ENCODE measurements at regions of chr10 and their contacts with region 1.

Region 1: DNA sequence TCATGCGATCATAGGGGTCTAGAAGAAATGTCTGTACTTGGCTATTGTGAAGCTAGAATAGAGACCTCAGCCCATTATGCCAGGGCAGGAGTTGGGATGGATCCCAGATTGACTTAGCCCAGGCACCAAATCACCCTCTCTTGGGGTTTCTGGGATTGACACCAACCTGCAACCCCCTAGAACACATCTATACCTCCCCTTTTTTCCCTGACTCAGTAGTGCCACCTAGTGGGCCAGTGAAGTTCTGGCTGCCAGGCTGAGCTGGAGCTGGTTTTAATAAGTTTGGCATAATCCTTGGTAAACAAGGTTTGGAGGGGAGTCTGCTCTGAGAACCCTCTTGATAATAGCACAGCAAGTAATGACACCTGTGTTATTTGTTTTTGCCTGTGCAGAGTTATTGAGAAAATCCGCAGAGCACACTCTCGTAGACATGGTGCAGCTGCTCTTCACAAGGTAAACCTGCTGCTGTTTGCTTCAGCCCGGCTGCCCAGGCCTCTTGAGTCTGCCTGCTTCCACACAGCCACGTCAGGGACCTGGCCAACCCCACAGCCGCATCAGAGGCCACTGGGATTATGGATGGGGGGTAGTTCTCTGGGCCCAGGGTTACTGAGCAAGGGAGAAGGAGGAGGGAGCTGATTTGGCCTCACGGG is 43.3 kb upstream of the NFKB2 start:
- DNase-seq: peak in 1 of 2 donors; percentile 69
- H3K4me3 ChIP-seq: no peak overlapping the region
- H3K27ac ChIP-seq: no peak overlapping the region
- H3K4me1 ChIP-seq: no peaks in the 10 kb centered on the region
- H3K27me3 ChIP-seq: no peaks in the 10 kb centered on the region
- CTCF ChIP-seq: peak; percentile 67 to 92 (median 80)

Region 2: GRCh38 chr10:102167861-102168260 is 184.3 kb before region 1 on chr10:
- intact Hi-C with region 1: loop called (anchors 2 kb)
- DNase-seq: no peak
- H3K4me3 ChIP-seq: no peak overlapping the region
- H3K27ac ChIP-seq: no peak overlapping the region
- H3K4me1 ChIP-seq: peaks cover 0 to 2% of the 10 kb centered on the region in 2 donors
- H3K27me3 ChIP-seq: no peaks in the 10 kb centered on the region
- CTCF ChIP-seq: no peak

Region 3: GRCh38 chr10:102444851-102445250 is 92.7 kb after region 1 on chr10:
- intact Hi-C with region 1: no loop called
- DNase-seq: no peak
- H3K4me3 ChIP-seq: no peak overlapping the region
- H3K27ac ChIP-seq: no peak overlapping the region
- H3K4me1 ChIP-seq: peaks cover under 1 to 2% of the 10 kb centered on the region in 2 donors
- H3K27me3 ChIP-seq: no peaks in the 10 kb centered on the region
- CTCF ChIP-seq: no peak